Dendritic cell treated with granulocyte-macrophage colony-stimulating factor and Interleukin-4, amounts not matched to agents 40 ng/mL and 50 ng/mL, for 4 days (primary cell): ENCODE measurements at regions of chr10 and their contacts with region 1.

Region 1: DNA sequence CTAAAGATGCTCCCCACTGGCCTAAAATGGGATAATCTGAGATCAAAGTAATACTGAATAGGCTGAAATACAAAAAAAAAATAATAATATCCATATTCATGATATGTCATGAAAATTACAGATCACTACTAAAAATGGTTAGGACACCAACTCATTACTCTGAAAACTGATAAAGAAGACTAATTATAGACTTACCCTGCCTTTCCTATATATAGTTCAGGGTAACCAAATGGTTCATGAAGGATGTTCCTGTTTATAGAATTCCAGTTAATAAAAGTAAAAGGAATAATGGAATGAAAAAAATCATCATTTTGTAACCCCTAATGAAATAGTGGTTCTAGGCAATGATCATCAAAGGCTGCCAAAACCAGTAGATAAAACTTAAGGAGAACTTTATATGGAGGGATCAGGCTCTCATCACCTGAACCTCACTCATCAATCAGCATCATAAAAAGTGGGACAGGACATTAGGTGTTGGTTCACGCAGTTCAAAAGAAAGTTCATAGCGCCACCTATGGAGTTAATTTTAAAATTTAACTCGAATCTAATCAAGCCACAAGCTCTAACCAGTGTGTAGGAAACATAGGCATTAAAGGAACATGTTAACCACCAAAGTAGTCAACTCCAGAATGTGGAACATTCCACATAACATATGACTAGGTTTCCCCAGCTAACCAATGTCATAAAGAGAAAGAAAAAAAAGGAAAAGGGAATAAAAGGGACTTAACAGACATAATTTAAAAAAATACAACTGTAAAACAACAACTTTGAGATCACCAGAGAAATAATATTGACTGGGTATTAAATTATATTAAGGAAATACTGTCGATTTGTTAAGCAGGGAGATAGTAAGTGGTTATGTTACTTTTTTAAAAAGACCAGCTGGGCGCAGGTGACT is 35.7 kb downstream of the P4HA1 start:
- H3K4me3 Mint-ChIP-seq: no peak overlapping the region
- H3K27ac Mint-ChIP-seq: no peak overlapping the region
- H3K4me1 Mint-ChIP-seq: peaks cover 5% of the 10 kb centered on the region
- H3K27me3 Mint-ChIP-seq: no peaks in the 10 kb centered on the region

Region 2: GRCh38 chr10:72858067-72858466 is 202.9 kb before region 1 on chr10:
- intact Hi-C with region 1: no loop called
- H3K4me3 Mint-ChIP-seq: no peak overlapping the region
- H3K27ac Mint-ChIP-seq: no peak overlapping the region
- H3K4me1 Mint-ChIP-seq: no peaks in the 10 kb centered on the region
- H3K27me3 Mint-ChIP-seq: no peaks in the 10 kb centered on the region

Region 3: GRCh38 chr10:72976886-72977285 is 84.1 kb before region 1 on chr10:
- intact Hi-C with region 1: no loop called
- H3K4me3 Mint-ChIP-seq: no peak overlapping the region
- H3K27ac Mint-ChIP-seq: no peak overlapping the region
- H3K4me1 Mint-ChIP-seq: no peaks in the 10 kb centered on the region
- H3K27me3 Mint-ChIP-seq: peaks cover 5% of the 10 kb centered on the region

Region 4: GRCh38 chr10:73003822-73004221 is 57.2 kb before region 1 on chr10:
- intact Hi-C with region 1: no loop called
- H3K4me3 Mint-ChIP-seq: no peak overlapping the region
- H3K27ac Mint-ChIP-seq: no peak overlapping the region
- H3K4me1 Mint-ChIP-seq: no peaks in the 10 kb centered on the region
- H3K27me3 Mint-ChIP-seq: no peaks in the 10 kb centered on the region

Region 5: DNA sequence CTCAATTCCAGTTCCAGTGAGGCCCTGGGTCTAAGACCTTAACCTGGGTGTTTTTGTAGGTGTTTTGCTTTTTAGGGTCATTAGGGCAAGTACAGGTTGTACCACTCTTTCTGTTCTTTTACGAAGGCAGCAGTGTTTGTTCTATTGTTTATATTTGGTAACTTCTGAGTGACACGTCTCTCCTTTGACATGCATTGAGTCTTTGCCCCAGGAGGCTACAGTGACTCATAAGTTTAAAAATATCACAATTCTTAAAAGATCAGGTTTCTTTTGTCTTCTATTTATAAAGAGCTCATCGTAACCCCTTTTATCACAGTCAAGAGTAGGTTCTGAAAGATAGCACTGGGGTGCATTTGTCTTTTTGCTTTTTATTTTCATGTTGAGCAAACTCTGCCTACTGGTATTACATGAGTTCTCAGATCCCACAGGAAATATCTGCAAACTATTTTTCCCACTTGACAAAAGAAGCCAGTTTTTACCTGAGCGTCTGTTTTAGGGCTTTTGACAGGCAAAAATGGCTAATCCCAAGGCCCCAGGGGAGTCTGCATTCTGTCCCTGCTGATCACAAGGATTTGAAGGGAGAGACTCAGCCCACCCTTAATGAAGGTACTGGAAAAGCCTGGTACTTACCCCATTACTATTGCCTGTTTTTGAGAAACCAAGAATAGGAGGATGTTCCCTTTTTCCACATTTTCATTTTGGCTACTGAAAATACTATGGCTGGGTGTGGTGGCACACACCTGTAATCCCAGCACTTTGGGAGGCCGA is 57.2 kb after region 1 on chr10:
- intact Hi-C with region 1: no loop called
- H3K4me3 Mint-ChIP-seq: no peak overlapping the region
- H3K27ac Mint-ChIP-seq: no peak overlapping the region
- H3K4me1 Mint-ChIP-seq: no peaks in the 10 kb centered on the region
- H3K27me3 Mint-ChIP-seq: no peaks in the 10 kb centered on the region

Region 6: DNA sequence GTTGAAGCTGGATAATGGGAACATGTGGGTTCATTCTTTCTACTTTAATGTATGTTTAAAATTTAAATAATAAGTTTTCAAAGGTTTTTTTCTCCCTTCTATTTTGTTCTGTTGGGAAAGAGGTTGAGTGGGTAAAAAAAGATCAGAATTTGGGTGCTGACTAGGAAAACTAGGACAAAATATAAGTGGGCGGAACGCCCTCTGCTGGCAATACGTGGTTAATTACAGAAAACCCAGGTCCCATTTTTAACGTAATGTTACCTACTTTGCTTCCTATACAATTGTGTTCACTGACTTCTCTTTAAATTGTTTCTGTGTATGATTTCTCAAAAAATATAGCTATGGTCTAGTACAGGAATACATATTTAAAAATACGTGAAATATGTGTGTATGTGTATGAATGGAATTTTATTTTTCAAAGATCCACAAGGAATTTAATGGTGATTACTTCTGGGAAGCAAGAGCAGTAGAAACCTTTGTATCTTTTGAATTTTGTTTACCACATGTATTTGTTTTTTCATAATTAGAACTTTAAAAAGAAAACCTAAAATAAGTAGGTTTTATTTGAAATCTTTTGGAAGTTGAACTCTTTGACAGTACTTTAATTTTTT is 98.2 kb after region 1 on chr10:
- intact Hi-C with region 1: loop called (anchors 10 kb)
- H3K4me3 Mint-ChIP-seq: no peak overlapping the region
- H3K27ac Mint-ChIP-seq: no peak overlapping the region
- H3K4me1 Mint-ChIP-seq: peaks cover 25% of the 10 kb centered on the region
- H3K27me3 Mint-ChIP-seq: no peaks in the 10 kb centered on the region